Activated T-helper 2 cell treated with anti-CD3 and anti-CD28 coated beads, Interferon-gamma antibody, Interleukin-2, Interleukin-4, amounts not matched to agents 10 μg/mL and 5 μg/mL and 100 μg/mL, durations not matched to agents 14 hours and 24 hours and 36 hours (primary cell): ENCODE measurements at regions of chr20 and their contacts with region 1.

Region 1: GRCh38 chr20:36808317-36809257 is 35.0 kb upstream of the DSN1 start:
- DNase-seq: peak; percentile 57
- H3K4me3 Mint-ChIP-seq: no peak overlapping the region
- H3K27ac Mint-ChIP-seq: no peak overlapping the region
- H3K4me1 Mint-ChIP-seq: no peaks in the 10 kb centered on the region
- H3K27me3 Mint-ChIP-seq: no peaks in the 10 kb centered on the region

Region 2: GRCh38 chr20:36861875-36862801 is 53.6 kb after region 1 on chr20:
- intact Hi-C with region 1: no loop called
- DNase-seq: no peak
- H3K4me3 Mint-ChIP-seq: peak overlapping the region; percentile 52
- H3K27ac Mint-ChIP-seq: no peak overlapping the region
- H3K4me1 Mint-ChIP-seq: peaks cover 14% of the 10 kb centered on the region
- H3K27me3 Mint-ChIP-seq: peaks cover 33% of the 10 kb centered on the region

Region 3: GRCh38 chr20:36886859-36887751 is 78.5 kb after region 1 on chr20:
- intact Hi-C with region 1: loop called (anchors 2 kb)
- DNase-seq: peak; percentile 70
- H3K4me3 Mint-ChIP-seq: no peak overlapping the region
- H3K27ac Mint-ChIP-seq: peak overlapping the region; percentile 2
- H3K4me1 Mint-ChIP-seq: peaks cover 6% of the 10 kb centered on the region
- H3K27me3 Mint-ChIP-seq: no peaks in the 10 kb centered on the region

Region 4: GRCh38 chr20:36941401-36941835 is 132.8 kb after region 1 on chr20:
- intact Hi-C with region 1: no loop called
- DNase-seq: no peak
- H3K4me3 Mint-ChIP-seq: no peak overlapping the region
- H3K27ac Mint-ChIP-seq: peak overlapping the region; percentile 88
- H3K4me1 Mint-ChIP-seq: peaks cover 46% of the 10 kb centered on the region
- H3K27me3 Mint-ChIP-seq: no peaks in the 10 kb centered on the region